CD8-positive, alpha-beta memory T cell (primary cell): ENCODE measurements at regions of chr12 and their contacts with region 1.

Region 1: GRCh38 chr12:57229634-57230380 is at the start of gene SHMT2:
- DNase-seq: peak; percentile 83 to 96 (median 89)
- H3K4me3 ChIP-seq: peak within 1 kb of the TSS; percentile 84
- H3K4me3 Mint-ChIP-seq: peak within 1 kb of the TSS; percentile 89 to 97 (median 95)
- H3K27ac ChIP-seq: peak within 1 kb of the TSS; percentile 62
- H3K27ac Mint-ChIP-seq: peak within 1 kb of the TSS; percentile 45 to 94 (median 91)
- H3K4me1 ChIP-seq: peaks cover 36% of the 10 kb centered on the region
- H3K4me1 Mint-ChIP-seq: peaks cover 32 to 58% (median 51%) of the 10 kb centered on the region in 3 donors
- H3K27me3 ChIP-seq: peaks cover 20% of the 10 kb centered on the region
- H3K27me3 Mint-ChIP-seq: peaks cover 17 to 27% of the 10 kb centered on the region in 2 donors
- total RNA-seq, gene SHMT2: 349 to 352 TPM

Region 2: DNA sequence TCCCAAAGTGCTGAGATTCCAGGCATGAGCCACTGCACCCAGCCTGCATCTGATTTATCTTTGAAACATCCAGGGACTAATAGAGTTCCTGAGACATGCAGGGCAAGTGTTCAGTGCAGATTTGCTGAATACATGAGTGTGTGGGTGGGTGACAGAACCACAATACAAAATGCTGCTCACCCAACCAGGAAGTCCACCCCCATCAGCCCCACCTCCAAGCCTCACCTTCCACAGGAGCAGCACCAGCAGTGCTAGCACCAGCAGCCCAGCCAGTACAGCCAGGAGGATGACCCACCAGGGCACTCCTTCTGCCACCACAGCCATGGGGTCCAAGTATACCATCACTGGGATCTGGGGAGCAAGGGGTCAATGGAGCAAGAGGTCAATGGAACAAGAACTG is 1542.1 kb before region 1 on chr12:
- CTCF ChIA-PET with region 1: no interaction called
- POLR2A ChIA-PET with region 1: interaction called, 10 read pairs
- DNase-seq: peak in 1 of 5 donors; percentile 43
- H3K4me3 ChIP-seq: no peak overlapping the region
- H3K4me3 Mint-ChIP-seq: peak overlapping the region in 3 of 7 donors; percentile 5 to 41 (median 36)
- H3K27ac ChIP-seq: no peak overlapping the region
- H3K27ac Mint-ChIP-seq: peak overlapping the region in 1 of 8 donors; percentile 13
- H3K4me1 ChIP-seq: peaks cover 5% of the 10 kb centered on the region
- H3K4me1 Mint-ChIP-seq: peaks cover 7 to 10% (median 9%) of the 10 kb centered on the region in 3 donors
- H3K27me3 ChIP-seq: no peaks in the 10 kb centered on the region
- H3K27me3 Mint-ChIP-seq: peaks cover 0 to 7% of the 10 kb centered on the region in 2 donors

Region 3: GRCh38 chr12:56922031-56922430 is 307.8 kb before region 1 on chr12:
- CTCF ChIA-PET with region 1: no interaction called
- POLR2A ChIA-PET with region 1: no interaction called
- DNase-seq: no peak
- H3K4me3 ChIP-seq: no peak overlapping the region
- H3K4me3 Mint-ChIP-seq: no peak overlapping the region
- H3K27ac ChIP-seq: no peak overlapping the region
- H3K27ac Mint-ChIP-seq: no peak overlapping the region
- H3K4me1 ChIP-seq: no peaks in the 10 kb centered on the region
- H3K4me1 Mint-ChIP-seq: no peaks in the 10 kb centered on the region
- H3K27me3 ChIP-seq: no peaks in the 10 kb centered on the region
- H3K27me3 Mint-ChIP-seq: peaks cover 4 to 16% of the 10 kb centered on the region in 2 donors

Region 4: GRCh38 chr12:57049890-57050289 is 179.9 kb before region 1 on chr12 and contains the start of gene MYO1A:
- CTCF ChIA-PET with region 1: no interaction called
- POLR2A ChIA-PET with region 1: no interaction called
- DNase-seq: no peak
- H3K4me3 ChIP-seq: no peak within 1 kb of the TSS
- H3K4me3 Mint-ChIP-seq: no peak within 1 kb of the TSS
- H3K27ac ChIP-seq: no peak within 1 kb of the TSS
- H3K27ac Mint-ChIP-seq: peak within 1 kb of the TSS in 4 of 8 donors; percentile 11 to 65 (median 50)
- H3K4me1 ChIP-seq: peaks cover 20% of the 10 kb centered on the region
- H3K4me1 Mint-ChIP-seq: peaks cover 24 to 29% (median 28%) of the 10 kb centered on the region in 3 donors
- H3K27me3 ChIP-seq: no peaks in the 10 kb centered on the region
- H3K27me3 Mint-ChIP-seq: peaks cover 3 to 5% of the 10 kb centered on the region in 2 donors
- total RNA-seq, gene MYO1A: 0.51 to 0.70 TPM

Region 5: GRCh38 chr12:57213058-57213715 is 16.6 kb before region 1 on chr12:
- CTCF ChIA-PET with region 1: interaction called, 48 read pairs
- POLR2A ChIA-PET with region 1: interaction called, 3 read pairs
- DNase-seq: peak; percentile 74 to 87 (median 80)
- H3K4me3 ChIP-seq: no peak overlapping the region
- H3K4me3 Mint-ChIP-seq: peak overlapping the region in 3 of 7 donors; percentile 25 to 79 (median 40)
- H3K27ac ChIP-seq: no peak overlapping the region
- H3K27ac Mint-ChIP-seq: peak overlapping the region in 5 of 8 donors; percentile 32 to 68 (median 59)
- H3K4me1 ChIP-seq: peaks cover 36% of the 10 kb centered on the region
- H3K4me1 Mint-ChIP-seq: peaks cover 31 to 49% (median 36%) of the 10 kb centered on the region in 3 donors
- H3K27me3 ChIP-seq: peaks cover 42% of the 10 kb centered on the region
- H3K27me3 Mint-ChIP-seq: peaks cover 43 to 46% of the 10 kb centered on the region in 2 donors